ENCODE measurements at regions of chr3 and their contacts with region 1.

Region 1: GRCh38 chr3:108090701-108091451 is at the start of gene CD47:
- DNase-seq: peak; percentile 96
- ATAC-seq: peak; percentile 76
- H3K4me3 ChIP-seq: peak within 1 kb of the TSS; percentile 76 to 98 (median 96)
- H3K4me3 Mint-ChIP-seq: peak within 1 kb of the TSS; percentile 99
- H3K27ac ChIP-seq: peak within 1 kb of the TSS; percentile 89 to 97
- H3K27ac Mint-ChIP-seq: peak within 1 kb of the TSS; percentile 99
- H3K4me1 ChIP-seq: peaks cover 35 to 40% of the 10 kb centered on the region in 2 donors
- H3K4me1 Mint-ChIP-seq: peaks cover 25% of the 10 kb centered on the region
- H3K27me3 ChIP-seq: no peaks in the 10 kb centered on the region
- H3K27me3 Mint-ChIP-seq: no peaks in the 10 kb centered on the region
- CTCF ChIP-seq: no peak
- total RNA-seq, gene CD47: 259 and 260 TPM in 2 replicates

Region 2: DNA sequence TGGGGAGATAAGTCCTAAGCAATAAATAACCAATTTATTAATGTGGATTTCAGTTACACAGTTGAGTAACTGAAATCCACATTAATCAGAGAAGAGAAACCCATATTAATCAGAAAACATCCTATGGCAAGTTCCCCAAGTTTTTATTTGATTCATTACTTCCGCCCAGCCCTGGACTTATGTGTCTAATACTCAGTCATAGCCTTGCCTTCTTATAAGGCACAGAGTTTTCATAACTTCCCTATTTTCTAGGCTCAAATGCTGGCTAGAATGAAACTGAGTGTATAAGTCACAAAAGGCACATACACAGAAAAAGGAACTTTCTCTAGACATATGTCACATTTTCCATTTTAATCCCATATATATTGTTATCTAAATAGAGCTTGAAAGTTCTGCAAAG is 28.8 kb before region 1 on chr3:
- CTCF ChIA-PET with region 1: no interaction called
- POLR2A ChIA-PET with region 1: no interaction called
- intact Hi-C with region 1: loop called (anchors 2 kb)
- DNase-seq: peak; percentile 64
- ATAC-seq: peak; percentile 86
- H3K4me3 ChIP-seq: no peak overlapping the region
- H3K4me3 Mint-ChIP-seq: peak overlapping the region; percentile 42
- H3K27ac ChIP-seq: peak overlapping the region in 1 of 2 donors; percentile 63
- H3K27ac Mint-ChIP-seq: peak overlapping the region; percentile 1
- H3K4me1 ChIP-seq: peaks cover 13 to 30% of the 10 kb centered on the region in 2 donors
- H3K4me1 Mint-ChIP-seq: peaks cover 64% of the 10 kb centered on the region
- H3K27me3 ChIP-seq: no peaks in the 10 kb centered on the region
- H3K27me3 Mint-ChIP-seq: no peaks in the 10 kb centered on the region
- CTCF ChIP-seq: no peak

Region 3: DNA sequence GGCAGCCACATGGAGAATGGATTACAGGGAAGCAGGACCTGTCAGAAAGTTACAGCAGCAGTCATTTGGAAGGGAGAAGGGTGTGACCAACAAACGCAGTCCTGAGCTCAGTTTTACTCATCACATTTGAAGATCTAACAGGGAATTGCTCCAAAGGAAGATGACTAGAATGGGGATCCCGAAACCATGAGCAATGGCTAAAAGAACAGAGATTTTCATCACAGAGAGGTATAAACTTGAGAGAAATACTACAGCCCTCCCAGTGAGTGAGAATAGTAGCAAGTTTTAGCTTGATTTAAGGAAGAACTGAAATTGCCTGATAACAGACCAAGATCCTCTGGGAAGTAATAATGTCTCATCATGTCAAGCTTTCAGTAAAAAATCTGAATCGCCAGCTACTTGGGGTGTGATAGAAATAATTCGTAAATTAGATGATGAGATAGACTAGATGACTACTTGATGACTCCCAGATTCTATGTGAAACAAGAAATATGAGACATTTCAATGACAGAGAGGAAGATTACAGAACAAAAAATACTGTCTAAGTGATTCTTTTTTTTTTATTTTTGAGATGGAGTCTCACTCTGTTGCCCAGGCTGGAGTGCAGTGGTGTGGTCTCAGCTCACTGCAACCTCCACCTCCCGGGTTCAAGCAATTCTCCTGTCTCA is 17.0 kb before region 1 on chr3:
- CTCF ChIA-PET with region 1: interaction called, 4 read pairs
- POLR2A ChIA-PET with region 1: no interaction called
- intact Hi-C with region 1: loop called (anchors 2 kb)
- DNase-seq: no peak
- ATAC-seq: no peak
- H3K4me3 ChIP-seq: no peak overlapping the region
- H3K4me3 Mint-ChIP-seq: no peak overlapping the region
- H3K27ac ChIP-seq: peak overlapping the region in 1 of 2 donors; percentile 52
- H3K27ac Mint-ChIP-seq: peak overlapping the region; percentile 2
- H3K4me1 ChIP-seq: peaks cover 23 to 40% of the 10 kb centered on the region in 2 donors
- H3K4me1 Mint-ChIP-seq: peaks cover 75% of the 10 kb centered on the region
- H3K27me3 ChIP-seq: no peaks in the 10 kb centered on the region
- H3K27me3 Mint-ChIP-seq: no peaks in the 10 kb centered on the region
- CTCF ChIP-seq: no peak

Region 4: GRCh38 chr3:108079877-108080659 is 10.8 kb before region 1 on chr3:
- CTCF ChIA-PET with region 1: interaction called, 4 read pairs
- POLR2A ChIA-PET with region 1: no interaction called
- intact Hi-C with region 1: loop called (anchors 1 kb)
- DNase-seq: no peak
- ATAC-seq: no peak
- H3K4me3 ChIP-seq: no peak overlapping the region
- H3K4me3 Mint-ChIP-seq: peak overlapping the region; percentile 6
- H3K27ac ChIP-seq: peak overlapping the region in 1 of 2 donors; percentile 67
- H3K27ac Mint-ChIP-seq: peak overlapping the region; percentile 42
- H3K4me1 ChIP-seq: peaks cover 46 to 84% of the 10 kb centered on the region in 2 donors
- H3K4me1 Mint-ChIP-seq: peaks cover 52% of the 10 kb centered on the region
- H3K27me3 ChIP-seq: no peaks in the 10 kb centered on the region
- H3K27me3 Mint-ChIP-seq: no peaks in the 10 kb centered on the region
- CTCF ChIP-seq: no peak

Region 5: DNA sequence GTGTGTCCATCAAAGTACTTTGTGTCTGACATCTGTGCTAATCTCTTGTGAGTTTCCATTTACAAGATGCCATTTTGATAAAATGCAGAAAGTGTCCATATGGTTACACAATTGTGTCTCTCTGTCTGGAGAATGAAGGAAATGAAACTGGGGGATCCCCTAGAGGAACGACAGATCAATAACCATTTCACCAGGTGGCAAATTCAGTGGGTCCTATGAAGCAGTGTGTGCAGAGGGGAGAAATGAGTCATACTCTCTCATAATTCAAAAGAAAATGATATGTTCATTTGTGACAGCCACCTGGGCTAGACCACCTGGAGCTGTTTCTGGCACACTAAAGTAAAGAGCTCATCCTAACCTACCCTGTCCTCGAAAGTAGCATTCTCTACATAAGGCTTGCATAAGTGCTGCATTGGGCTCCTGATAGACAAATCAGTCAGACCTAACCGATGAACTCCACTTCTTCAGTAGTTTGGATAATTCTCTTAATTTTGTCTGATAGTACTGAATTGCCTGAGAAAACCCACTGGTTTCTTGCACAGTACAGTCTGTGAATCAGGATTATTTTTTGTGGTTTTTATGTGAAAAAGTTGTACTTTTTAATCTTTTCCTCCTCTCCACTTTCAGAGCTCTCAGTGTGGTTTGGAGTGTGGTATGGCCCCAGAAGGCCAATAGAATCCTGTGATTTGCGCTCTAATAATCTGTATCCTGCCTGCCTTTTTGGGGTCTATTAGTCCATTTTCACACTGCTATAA is 10.2 kb after region 1 on chr3:
- CTCF ChIA-PET with region 1: interaction called, 6 read pairs
- POLR2A ChIA-PET with region 1: interaction called, 7 read pairs
- intact Hi-C with region 1: loop called (anchors 1 kb)
- DNase-seq: peak; percentile 85
- ATAC-seq: peak; percentile 83
- H3K4me3 ChIP-seq: no peak overlapping the region
- H3K4me3 Mint-ChIP-seq: peak overlapping the region; percentile 44
- H3K27ac ChIP-seq: peak overlapping the region; percentile 56 to 89
- H3K27ac Mint-ChIP-seq: peak overlapping the region; percentile 88
- H3K4me1 ChIP-seq: peaks cover 48% of the 10 kb centered on the region in 2 donors
- H3K4me1 Mint-ChIP-seq: peaks cover 58% of the 10 kb centered on the region
- H3K27me3 ChIP-seq: no peaks in the 10 kb centered on the region
- H3K27me3 Mint-ChIP-seq: no peaks in the 10 kb centered on the region
- CTCF ChIP-seq: no peak

Measured in B cell (primary cell).